ENCODE measurements at regions of chr9 and their contacts with region 1.

Region 1: DNA sequence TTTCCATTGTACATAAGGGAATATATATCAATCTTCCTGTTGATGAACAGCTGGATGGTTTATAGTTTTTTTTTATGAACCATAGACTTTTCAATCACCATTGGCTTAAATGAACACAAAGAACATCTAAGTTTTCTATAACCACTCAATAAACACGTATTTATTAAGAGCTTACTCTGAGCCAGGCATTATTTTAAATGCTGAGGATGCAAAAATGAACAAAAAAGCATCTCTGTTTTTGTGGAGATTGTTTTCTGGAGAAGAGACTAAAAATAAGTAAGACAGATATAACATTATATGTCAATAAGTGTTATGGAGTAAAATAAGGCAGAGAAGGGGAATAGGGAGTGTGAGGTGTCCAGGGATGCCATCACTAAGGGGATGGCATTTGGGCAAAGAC is 52.1 kb upstream of the SLC24A2 start:
- DNase-seq: no peak
- ATAC-seq: no peak
- H3K4me3 ChIP-seq: no peak overlapping the region
- H3K4me3 Mint-ChIP-seq: no peak overlapping the region
- H3K27ac ChIP-seq: no peak overlapping the region
- H3K27ac Mint-ChIP-seq: no peak overlapping the region
- H3K4me1 ChIP-seq: no peaks in the 10 kb centered on the region
- H3K4me1 Mint-ChIP-seq: no peaks in the 10 kb centered on the region
- H3K27me3 ChIP-seq: no peaks in the 10 kb centered on the region
- H3K27me3 Mint-ChIP-seq: no peaks in the 10 kb centered on the region
- CTCF ChIP-seq: no peak

Region 2: DNA sequence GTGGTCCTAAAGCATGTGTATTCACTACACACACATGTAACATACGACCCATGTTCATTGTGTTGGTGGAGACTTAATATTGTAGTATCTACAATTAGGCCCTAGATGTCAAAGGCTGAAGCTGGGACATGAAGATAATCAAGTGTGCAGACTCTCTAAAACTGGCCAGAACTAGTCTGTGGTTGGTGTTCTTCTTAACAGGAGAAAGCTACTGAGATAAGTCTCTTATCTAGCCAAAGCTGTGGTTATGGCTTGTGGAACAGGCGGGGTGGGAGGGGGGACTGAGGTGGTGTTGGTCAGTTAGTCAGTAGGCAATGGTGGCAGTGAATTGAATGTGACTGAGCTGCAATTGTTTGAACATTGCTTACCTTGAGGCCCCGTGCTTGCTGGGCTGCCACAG is 60.6 kb after region 1 on chr9:
- CTCF ChIA-PET with region 1: no interaction called
- POLR2A ChIA-PET with region 1: no interaction called
- intact Hi-C with region 1: loop called in 1 of 2 experiments (anchors 10 kb)
- DNase-seq: no peak
- ATAC-seq: no peak
- H3K4me3 ChIP-seq: no peak overlapping the region
- H3K4me3 Mint-ChIP-seq: no peak overlapping the region
- H3K27ac ChIP-seq: no peak overlapping the region
- H3K27ac Mint-ChIP-seq: no peak overlapping the region
- H3K4me1 ChIP-seq: no peaks in the 10 kb centered on the region
- H3K4me1 Mint-ChIP-seq: no peaks in the 10 kb centered on the region
- H3K27me3 ChIP-seq: no peaks in the 10 kb centered on the region
- H3K27me3 Mint-ChIP-seq: no peaks in the 10 kb centered on the region
- CTCF ChIP-seq: no peak

Measured in CD4-positive, alpha-beta T cell (primary cell).